ENCODE measurements at regions of chr6 and their contacts with region 1.

Region 1: GRCh38 chr6:42217519-42218367 is at the start of gene MRPS10:
- DNase-seq: peak; percentile 95
- ATAC-seq: peak; percentile 99
- H3K4me3 Mint-ChIP-seq: peak within 1 kb of the TSS; percentile 100
- H3K27ac Mint-ChIP-seq: peak within 1 kb of the TSS; percentile 100
- H3K4me1 Mint-ChIP-seq: peaks cover 14% of the 10 kb centered on the region
- H3K27me3 Mint-ChIP-seq: no peaks in the 10 kb centered on the region
- CTCF ChIP-seq: no peak
- total RNA-seq, gene MRPS10: 30.7 to 32.9 TPM (median 31.3 TPM) in 3 replicates

Region 2: GRCh38 chr6:42166444-42167141 is 51.1 kb before region 1 on chr6:
- CTCF ChIA-PET with region 1: interaction called, 22 read pairs
- POLR2A ChIA-PET with region 1: no interaction called
- DNase-seq: peak; percentile 96
- ATAC-seq: peak; percentile 91
- H3K4me3 Mint-ChIP-seq: no peak overlapping the region
- H3K27ac Mint-ChIP-seq: peak overlapping the region; percentile 81
- H3K4me1 Mint-ChIP-seq: peaks cover 45% of the 10 kb centered on the region
- H3K27me3 Mint-ChIP-seq: peaks cover 11% of the 10 kb centered on the region
- CTCF ChIP-seq: peak; percentile 96

Region 3: GRCh38 chr6:42185597-42185996 is 32.1 kb before region 1 on chr6:
- CTCF ChIA-PET with region 1: interaction called, 10 read pairs
- POLR2A ChIA-PET with region 1: no interaction called
- DNase-seq: no peak
- ATAC-seq: no peak; the same call in 1 of the 2 replicates
- H3K4me3 Mint-ChIP-seq: no peak overlapping the region
- H3K27ac Mint-ChIP-seq: no peak overlapping the region
- H3K4me1 Mint-ChIP-seq: peaks cover 34% of the 10 kb centered on the region
- H3K27me3 Mint-ChIP-seq: no peaks in the 10 kb centered on the region; the same call in 1 of the 2 replicates
- CTCF ChIP-seq: no peak

Region 4: GRCh38 chr6:42230345-42231321 is 12.9 kb after region 1 on chr6:
- CTCF ChIA-PET with region 1: interaction called, 12 read pairs
- POLR2A ChIA-PET with region 1: no interaction called
- DNase-seq: no peak
- ATAC-seq: peak; percentile 78
- H3K4me3 Mint-ChIP-seq: no peak overlapping the region
- H3K27ac Mint-ChIP-seq: peak overlapping the region; percentile 37; the same call in 1 of the 2 replicates
- H3K4me1 Mint-ChIP-seq: no peaks in the 10 kb centered on the region
- H3K27me3 Mint-ChIP-seq: no peaks in the 10 kb centered on the region
- CTCF ChIP-seq: no peak

Region 5: GRCh38 chr6:42281570-42281969 is 63.8 kb after region 1 on chr6:
- CTCF ChIA-PET with region 1: no interaction called
- POLR2A ChIA-PET with region 1: no interaction called
- DNase-seq: no peak
- ATAC-seq: no peak
- H3K4me3 Mint-ChIP-seq: no peak overlapping the region
- H3K27ac Mint-ChIP-seq: 0 out of 2 replicates have a peak overlapping the region, but pooled peaks have one; percentile 39
- H3K4me1 Mint-ChIP-seq: peaks cover 44% of the 10 kb centered on the region
- H3K27me3 Mint-ChIP-seq: no peaks in the 10 kb centered on the region
- CTCF ChIP-seq: no peak